AG04450 (cell line): ENCODE measurements at regions of chr1 and their contacts with region 1.

Region 1: GRCh38 chr1:214698559-214698958 is 95.6 kb downstream of the CENPF start:
- DNase-seq: no peak
- H3K4me3 ChIP-seq: no peak overlapping the region
- H3K27ac ChIP-seq: no peak overlapping the region
- H3K27me3 ChIP-seq: no peaks in the 10 kb centered on the region
- CTCF ChIP-seq: no peak

Region 2: DNA sequence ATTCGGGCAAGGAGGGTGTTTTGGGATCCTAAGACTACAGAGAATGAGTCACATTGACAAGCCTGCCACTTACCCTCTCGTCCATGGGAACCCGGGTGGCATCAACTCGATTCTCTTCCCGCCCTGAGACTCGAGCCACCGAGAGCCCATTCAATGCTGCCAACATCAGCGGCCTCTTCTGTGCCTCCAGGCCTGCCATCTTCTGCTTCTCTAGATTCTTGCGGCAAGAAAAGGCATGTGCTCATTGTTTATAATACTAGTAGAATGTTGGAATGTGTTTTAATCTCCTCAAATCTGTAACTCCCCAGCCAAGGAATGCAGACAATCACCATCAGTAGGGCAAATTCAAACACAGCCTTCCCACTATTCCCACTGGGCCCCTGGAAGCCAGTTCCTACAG is 320.7 kb before region 1 on chr1:
- CTCF ChIA-PET with region 1: no interaction called
- POLR2A ChIA-PET with region 1: no interaction called
- DNase-seq: peak; percentile 43
- H3K4me3 ChIP-seq: no peak overlapping the region
- H3K27ac ChIP-seq: no peak overlapping the region
- H3K27me3 ChIP-seq: no peaks in the 10 kb centered on the region
- CTCF ChIP-seq: no peak

Region 3: GRCh38 chr1:214673576-214673975 is 25.0 kb before region 1 on chr1:
- CTCF ChIA-PET with region 1: no interaction called
- POLR2A ChIA-PET with region 1: no interaction called
- DNase-seq: no peak
- H3K4me3 ChIP-seq: no peak overlapping the region
- H3K27ac ChIP-seq: no peak overlapping the region
- H3K27me3 ChIP-seq: no peaks in the 10 kb centered on the region
- CTCF ChIP-seq: no peak

Region 4: DNA sequence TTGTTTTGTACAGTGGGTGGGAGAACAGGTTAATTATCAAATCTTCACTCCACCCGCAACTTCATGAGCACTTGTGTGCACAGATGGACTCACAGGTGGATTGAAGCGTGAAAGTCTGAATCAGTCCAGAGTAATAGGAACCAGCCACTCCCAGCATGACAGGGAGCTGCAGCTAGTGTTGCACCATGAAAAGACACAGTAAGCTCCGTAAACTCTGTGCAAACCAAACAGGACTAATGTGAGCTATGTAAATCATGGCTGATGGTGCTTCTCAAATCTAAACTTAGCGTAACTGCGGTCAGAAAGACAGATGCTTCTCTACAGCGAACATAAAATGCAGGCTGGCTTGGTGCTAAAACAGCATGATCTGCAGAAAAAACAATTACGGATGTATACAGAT is 18.8 kb after region 1 on chr1:
- CTCF ChIA-PET with region 1: no interaction called
- POLR2A ChIA-PET with region 1: interaction called, 12 read pairs
- DNase-seq: no peak
- H3K4me3 ChIP-seq: no peak overlapping the region
- H3K27ac ChIP-seq: no peak overlapping the region
- H3K27me3 ChIP-seq: no peaks in the 10 kb centered on the region
- CTCF ChIP-seq: no peak